ENCODE measurements at regions of chr17 and their contacts with region 1.

Region 1: DNA sequence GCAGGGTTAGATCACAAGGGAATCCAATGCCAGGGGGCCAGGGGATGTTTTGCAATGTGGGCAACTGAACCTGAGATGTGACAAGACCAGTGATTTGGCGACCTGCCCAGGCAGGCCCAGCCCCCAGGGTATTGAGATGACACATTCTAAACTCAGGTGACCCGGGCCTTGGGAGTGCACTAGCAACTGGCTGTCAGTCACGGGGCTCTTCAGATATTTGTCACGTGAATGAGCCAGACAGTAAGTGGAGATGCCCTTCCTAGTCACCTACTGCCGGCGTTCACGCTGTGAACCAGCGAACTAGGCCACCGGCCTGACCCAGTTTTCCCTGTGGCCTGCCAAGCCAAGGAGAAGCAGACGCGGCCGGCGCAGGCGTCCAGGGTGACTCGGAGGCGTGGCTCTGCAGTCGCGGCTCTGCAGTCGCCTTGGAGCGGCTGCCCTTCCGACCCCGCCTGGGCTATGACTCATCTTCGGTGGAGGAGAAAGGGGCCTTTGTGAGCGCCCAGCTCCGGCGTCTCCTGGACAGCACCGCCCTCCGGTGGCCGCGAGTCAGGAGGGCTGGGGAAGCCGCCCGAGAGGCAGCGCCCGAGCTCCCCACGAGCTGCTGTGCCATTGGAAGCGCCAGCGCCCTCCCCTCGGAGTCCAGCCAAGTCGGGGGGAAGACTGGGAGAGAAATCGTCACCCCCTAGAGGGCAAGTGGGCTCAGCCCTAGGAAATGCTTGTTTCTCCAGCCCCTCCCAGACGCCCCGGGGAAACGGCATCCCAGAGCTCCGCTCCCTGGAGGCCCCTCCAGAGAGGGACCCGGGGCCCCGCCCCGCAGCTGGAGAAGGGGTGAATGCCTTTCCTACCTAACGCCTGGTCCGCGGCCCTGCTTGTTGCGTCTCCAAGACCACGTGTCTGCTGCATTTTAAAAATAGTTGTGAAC is 38.8 kb downstream of the WSB1 start:
- DNase-seq: peak; percentile 98
- ATAC-seq: peak; percentile 95
- H3K4me3 ChIP-seq: peak overlapping the region; percentile 39 to 73 (median 63)
- H3K27ac ChIP-seq: peak overlapping the region; percentile 88
- H3K4me1 ChIP-seq: peaks cover 43% of the 10 kb centered on the region
- H3K27me3 ChIP-seq: no peaks in the 10 kb centered on the region
- CTCF ChIP-seq: peak; percentile 99
- EP300 ChIP-seq: peak; percentile 34 to 45; a peak in 3 of 4 replicates
- POLR2A ChIP-seq: peak; percentile 40 to 49; a peak in 3 of 4 replicates
- RAD21 ChIP-seq: peak; percentile 99

Region 2: DNA sequence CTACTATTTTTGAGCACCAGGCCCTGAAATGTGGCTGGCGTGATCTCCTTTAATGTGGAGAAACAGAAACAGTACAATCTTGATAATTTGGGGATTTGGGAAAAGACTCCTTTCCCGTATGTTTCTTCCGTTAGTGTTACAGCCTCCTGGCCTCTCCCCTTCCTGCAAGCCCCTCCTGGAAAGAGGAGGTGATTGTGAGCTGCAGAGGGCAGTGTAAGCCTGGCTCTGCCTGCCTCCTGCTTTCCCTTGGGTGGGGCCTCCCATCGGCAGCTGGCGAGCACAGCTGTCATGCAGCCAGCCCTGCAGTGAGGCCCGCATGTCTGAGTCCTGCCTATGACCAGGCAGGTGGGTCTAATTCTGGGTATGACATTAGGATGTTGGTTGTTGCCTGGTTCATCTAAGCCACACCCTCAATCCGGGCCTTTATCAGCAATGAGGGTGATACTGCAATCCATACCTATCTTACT is 87.5 kb before region 1 on chr17:
- CTCF ChIA-PET with region 1: interaction called, 28 read pairs
- POLR2A ChIA-PET with region 1: interaction called, 3 read pairs
- in situ Hi-C with region 1: loop called (anchors 5 kb)
- intact Hi-C with region 1: loop called (anchors 1 kb)
- DNase-seq: peak; percentile 80
- ATAC-seq: peak; percentile 97
- H3K4me3 ChIP-seq: peak overlapping the region in 2 of 3 experiments; percentile 29 to 41; a peak in 1 of 6 replicates
- H3K27ac ChIP-seq: no peak overlapping the region
- H3K4me1 ChIP-seq: peaks cover 36% of the 10 kb centered on the region
- H3K27me3 ChIP-seq: peaks cover 3 to 11% of the 10 kb centered on the region in 2 experiments; a peak in 3 of 5 replicates
- CTCF ChIP-seq: peak; percentile 97
- EP300 ChIP-seq: no peak
- POLR2A ChIP-seq: no peak
- RAD21 ChIP-seq: peak; percentile 94

Region 3: DNA sequence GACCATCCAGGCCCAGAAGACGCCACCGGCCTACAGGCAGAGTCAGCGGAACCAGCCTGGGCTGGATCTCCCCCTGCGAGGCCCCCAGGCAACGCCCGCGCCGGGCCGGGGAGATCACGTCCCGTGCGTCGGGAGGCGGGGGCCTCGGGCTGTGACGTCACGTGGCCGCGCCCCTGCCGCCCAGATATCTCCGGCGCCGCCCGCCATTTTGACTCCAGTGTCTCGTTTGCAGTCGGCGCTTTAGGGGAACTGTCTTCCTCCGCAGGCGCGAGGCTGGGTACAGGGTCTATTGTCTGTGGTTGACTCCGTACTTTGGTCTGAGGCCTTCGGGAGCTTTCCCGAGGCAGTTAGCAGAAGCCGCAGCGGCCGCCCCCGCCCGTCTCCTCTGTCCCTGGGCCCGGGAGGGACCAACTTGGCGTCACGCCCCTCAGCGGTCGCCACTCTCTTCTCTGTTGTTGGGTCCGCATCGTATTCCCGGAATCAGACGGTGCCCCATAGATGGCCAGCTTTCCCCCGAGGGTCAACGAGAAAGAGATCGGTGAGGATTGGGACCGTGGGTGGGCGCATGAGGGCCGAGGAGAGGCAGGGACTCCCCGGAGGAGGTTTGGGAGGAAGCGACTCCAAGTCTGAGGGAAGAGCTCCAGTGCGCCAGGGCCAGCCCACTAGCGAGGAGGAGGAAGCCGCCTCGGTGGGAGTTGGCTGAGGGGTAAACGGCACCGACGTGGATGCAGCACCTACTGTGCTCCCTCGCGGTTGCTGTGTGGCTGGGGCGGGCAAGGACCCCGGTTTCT is 38.7 kb before region 1 on chr17 and contains the start of gene WSB1:
- CTCF ChIA-PET with region 1: no interaction called
- POLR2A ChIA-PET with region 1: interaction called, 54 read pairs
- in situ Hi-C with region 1: no loop called
- intact Hi-C with region 1: loop called (anchors 2 kb)
- DNase-seq: peak; percentile 77
- ATAC-seq: peak; percentile 88
- H3K4me3 ChIP-seq: peak within 1 kb of the TSS; percentile 93 to 99 (median 94)
- H3K27ac ChIP-seq: peak within 1 kb of the TSS; percentile 94
- H3K4me1 ChIP-seq: peaks cover 59% of the 10 kb centered on the region
- H3K27me3 ChIP-seq: no peaks in the 10 kb centered on the region; a peak in 1 of 5 replicates
- CTCF ChIP-seq: peak; percentile 42; the same call in 1 of the 2 replicates
- EP300 ChIP-seq: no peak; a peak in 1 of 4 replicates
- POLR2A ChIP-seq: peak; percentile 99
- RAD21 ChIP-seq: peak; percentile 47; the same call in 1 of the 2 replicates
- total RNA-seq, gene WSB1: 81.3 and 93.3 TPM in 2 replicates

Region 4: DNA sequence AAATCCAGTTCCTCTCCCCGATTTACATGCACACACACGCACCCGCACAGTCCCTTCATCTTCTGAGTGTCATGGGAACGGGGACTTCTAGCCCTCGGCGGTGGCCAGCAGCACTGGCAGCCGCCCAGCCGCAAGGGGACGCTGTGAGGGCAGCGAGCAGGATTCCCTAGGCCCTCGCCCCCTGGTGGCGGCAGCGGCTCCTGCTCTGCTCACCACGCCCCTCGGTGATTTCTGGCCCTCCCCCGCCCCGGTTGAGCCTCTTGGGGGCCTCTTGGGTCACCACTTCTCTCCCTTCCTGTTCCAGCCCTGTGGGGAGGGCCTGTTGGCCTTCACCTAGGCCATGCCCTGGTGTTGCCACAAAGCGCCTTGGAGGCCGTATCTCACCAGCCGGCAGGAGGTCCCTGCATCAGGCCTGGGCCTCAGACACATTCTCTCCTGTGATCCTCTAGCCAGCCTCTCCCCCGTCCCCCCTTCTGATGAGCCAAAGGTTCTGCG is 48.3 kb after region 1 on chr17:
- CTCF ChIA-PET with region 1: interaction called, 3 read pairs
- POLR2A ChIA-PET with region 1: no interaction called
- in situ Hi-C with region 1: no loop called
- intact Hi-C with region 1: loop called (anchors 2 kb)
- DNase-seq: peak; percentile 75
- ATAC-seq: peak; percentile 96
- H3K4me3 ChIP-seq: peak overlapping the region in 1 of 3 experiments; percentile 51; a peak in 1 of 6 replicates
- H3K27ac ChIP-seq: no peak overlapping the region
- H3K4me1 ChIP-seq: peaks cover 28% of the 10 kb centered on the region
- H3K27me3 ChIP-seq: peaks cover 0 to 6% of the 10 kb centered on the region in 2 experiments; a peak in 2 of 5 replicates
- CTCF ChIP-seq: peak; percentile 99
- EP300 ChIP-seq: peak in 1 of 2 experiments; percentile 18; a peak in 1 of 4 replicates
- POLR2A ChIP-seq: no peak
- RAD21 ChIP-seq: peak; percentile 95

Measured in HepG2 (cell line).